GM12878 (cell line): ENCODE measurements at regions of chr10 and their contacts with region 1.

Region 1: DNA sequence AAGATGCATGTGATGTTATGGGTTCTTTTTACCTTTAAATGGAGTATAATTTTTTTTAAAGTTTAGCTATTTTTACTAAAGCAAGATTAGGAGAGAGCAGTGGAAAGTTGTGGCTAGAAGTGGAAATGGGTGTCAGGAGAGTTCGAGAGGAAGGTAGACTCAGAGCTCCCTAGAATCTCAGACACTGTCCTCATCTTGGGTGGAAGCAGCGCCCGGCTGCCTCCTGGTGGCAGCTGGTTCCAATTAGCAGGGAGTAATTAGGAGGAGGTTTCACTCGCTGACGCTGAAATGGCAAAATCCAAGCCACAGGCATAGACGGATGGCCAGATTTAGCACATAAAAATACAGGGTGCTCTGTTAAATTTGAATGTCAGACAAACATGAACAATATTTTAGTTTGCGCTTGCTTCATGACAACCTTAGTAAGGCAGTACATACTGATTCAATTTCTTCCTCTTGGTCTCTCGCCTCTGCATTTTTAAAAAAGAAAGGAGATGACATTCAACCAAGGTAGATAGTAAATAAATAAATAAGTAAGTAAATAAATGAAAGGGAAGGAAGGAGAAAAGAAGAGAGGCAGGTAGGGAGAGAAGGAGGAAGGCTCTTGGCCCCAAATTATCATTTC is 58.5 kb downstream of the LGI1 start:
- DNase-seq: no peak
- ATAC-seq: peak; percentile 83
- H3K4me3 ChIP-seq: no peak overlapping the region
- H3K27ac ChIP-seq: no peak overlapping the region
- H3K4me1 ChIP-seq: no peaks in the 10 kb centered on the region
- H3K27me3 ChIP-seq: peaks cover 0 to 14% of the 10 kb centered on the region in 2 experiments; a peak in 2 of 4 replicates
- CTCF ChIP-seq: peak; percentile 64 to 71 (median 64)
- EP300 ChIP-seq: no peak
- POLR2A ChIP-seq: no peak
- RAD21 ChIP-seq: peak; percentile 68

Region 2: DNA sequence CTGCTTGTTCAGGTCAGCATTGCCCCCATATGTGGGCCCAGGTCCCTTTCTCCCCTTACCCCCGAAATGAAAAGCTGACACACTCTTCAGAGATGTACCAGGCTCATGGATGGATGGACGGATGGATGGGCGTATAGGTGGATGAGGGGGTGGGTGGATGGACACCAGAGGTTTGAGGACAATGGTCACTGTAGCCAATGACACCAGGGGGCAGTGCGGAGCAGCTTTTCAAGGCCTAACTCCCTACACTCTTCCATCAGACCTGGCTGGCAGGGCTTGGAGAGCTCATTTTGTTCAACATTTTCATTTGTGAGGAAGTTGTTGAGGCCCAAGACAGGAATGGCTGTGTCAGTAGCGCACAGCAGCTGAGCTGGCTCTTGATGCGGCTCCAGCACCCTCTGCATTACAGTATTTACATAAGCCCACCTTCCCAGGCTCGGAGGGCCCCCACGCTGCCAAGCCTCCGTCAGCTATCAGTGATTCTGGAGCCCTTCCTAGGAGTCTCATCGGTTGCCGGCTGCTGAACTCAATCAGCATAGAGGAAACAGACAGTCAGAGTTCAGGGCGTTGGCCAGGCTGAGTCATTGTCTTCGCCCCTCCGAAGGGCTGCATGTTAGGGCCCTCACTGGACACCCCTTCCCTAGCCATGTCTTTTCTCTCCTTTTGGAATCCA is 261.3 kb before region 1 on chr10:
- CTCF ChIA-PET with region 1: interaction called, 19 read pairs
- POLR2A ChIA-PET with region 1: no interaction called
- RAD21 ChIA-PET with region 1: interaction called, 13 read pairs
- SMC1A ChIA-PET with region 1: interaction called, 12 read pairs
- in situ Hi-C with region 1: loop called (anchors 10 kb)
- intact Hi-C with region 1: loop called (anchors 2 kb)
- DNase-seq: no peak
- ATAC-seq: peak; percentile 99
- H3K4me3 ChIP-seq: no peak overlapping the region
- H3K27ac ChIP-seq: no peak overlapping the region
- H3K4me1 ChIP-seq: no peaks in the 10 kb centered on the region
- H3K27me3 ChIP-seq: no peaks in the 10 kb centered on the region
- CTCF ChIP-seq: peak; percentile 77 to 83 (median 82)
- EP300 ChIP-seq: no peak
- POLR2A ChIP-seq: no peak
- RAD21 ChIP-seq: peak; percentile 57

Region 3: DNA sequence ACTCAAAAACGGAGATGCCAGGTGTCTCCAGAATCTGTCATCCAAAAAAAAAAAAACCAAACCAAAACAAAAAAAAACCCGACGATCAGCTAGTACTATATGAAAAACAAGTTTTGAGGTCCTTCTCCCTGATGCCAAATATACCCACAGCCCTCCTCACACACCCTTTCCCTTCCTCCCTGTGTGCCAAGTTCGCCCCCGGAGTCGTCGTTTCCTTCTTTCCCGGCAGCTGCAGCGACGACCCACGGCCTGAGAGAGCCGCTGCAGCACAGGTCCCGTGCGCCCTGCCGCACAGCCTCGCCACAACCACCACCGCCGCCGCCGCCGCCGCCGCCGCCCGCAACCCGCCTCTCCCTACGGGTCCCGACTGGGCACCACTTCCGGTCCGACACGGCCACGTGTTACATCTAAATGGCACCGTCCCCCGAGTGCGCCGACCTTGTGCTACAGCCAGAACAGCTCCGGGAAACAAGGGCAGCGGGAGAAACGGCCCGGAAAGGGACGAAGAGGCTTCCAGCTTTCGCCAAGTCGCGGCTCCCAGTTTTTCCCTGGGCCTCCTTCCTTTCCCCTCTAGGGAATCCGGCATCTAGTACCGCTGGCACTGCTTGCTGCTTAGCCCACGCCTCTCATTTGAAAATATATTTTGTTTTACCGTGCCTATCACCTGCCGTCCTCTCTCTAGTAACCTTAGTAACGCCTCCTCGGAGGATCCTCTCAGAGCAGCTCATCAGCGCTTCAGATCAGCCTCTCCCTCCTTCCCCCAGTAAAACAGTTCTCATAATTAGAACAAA is 113.8 kb before region 1 on chr10 and contains the start of gene FRA10AC1:
- CTCF ChIA-PET with region 1: interaction called, 46 read pairs
- POLR2A ChIA-PET with region 1: no interaction called
- RAD21 ChIA-PET with region 1: interaction called, 16 read pairs
- SMC1A ChIA-PET with region 1: interaction called, 36 read pairs
- in situ Hi-C with region 1: loop called (anchors 5 kb)
- intact Hi-C with region 1: loop called (anchors 1 kb)
- DNase-seq: no peak
- ATAC-seq: peak; percentile 91
- H3K4me3 ChIP-seq: peak within 1 kb of the TSS; percentile 87
- H3K27ac ChIP-seq: peak within 1 kb of the TSS; percentile 76
- H3K4me1 ChIP-seq: no peaks in the 10 kb centered on the region
- H3K27me3 ChIP-seq: no peaks in the 10 kb centered on the region
- CTCF ChIP-seq: peak; percentile 50 to 55 (median 54); a peak in 5 of 6 replicates
- EP300 ChIP-seq: peak; percentile 39 to 71; a peak in 2 of 4 replicates
- POLR2A ChIP-seq: peak; percentile 86
- RAD21 ChIP-seq: peak; percentile 52
- polyA plus RNA-seq, gene FRA10AC1: 5.3 to 10.8 TPM

Region 4: GRCh38 chr10:93859049-93859655 is 42.9 kb after region 1 on chr10:
- CTCF ChIA-PET with region 1: interaction called, 16 read pairs
- POLR2A ChIA-PET with region 1: no interaction called
- RAD21 ChIA-PET with region 1: interaction called, 3 read pairs
- SMC1A ChIA-PET with region 1: interaction called, 8 read pairs
- in situ Hi-C with region 1: no loop called
- intact Hi-C with region 1: no loop called
- DNase-seq: no peak
- ATAC-seq: peak; percentile 46; the same call in 1 of the 3 replicates
- H3K4me3 ChIP-seq: no peak overlapping the region
- H3K27ac ChIP-seq: no peak overlapping the region
- H3K4me1 ChIP-seq: no peaks in the 10 kb centered on the region
- H3K27me3 ChIP-seq: no peaks in the 10 kb centered on the region
- CTCF ChIP-seq: peak; percentile 20 to 49 (median 36); a peak in 4 of 6 replicates
- EP300 ChIP-seq: no peak
- POLR2A ChIP-seq: no peak
- RAD21 ChIP-seq: peak; percentile 58

Region 5: DNA sequence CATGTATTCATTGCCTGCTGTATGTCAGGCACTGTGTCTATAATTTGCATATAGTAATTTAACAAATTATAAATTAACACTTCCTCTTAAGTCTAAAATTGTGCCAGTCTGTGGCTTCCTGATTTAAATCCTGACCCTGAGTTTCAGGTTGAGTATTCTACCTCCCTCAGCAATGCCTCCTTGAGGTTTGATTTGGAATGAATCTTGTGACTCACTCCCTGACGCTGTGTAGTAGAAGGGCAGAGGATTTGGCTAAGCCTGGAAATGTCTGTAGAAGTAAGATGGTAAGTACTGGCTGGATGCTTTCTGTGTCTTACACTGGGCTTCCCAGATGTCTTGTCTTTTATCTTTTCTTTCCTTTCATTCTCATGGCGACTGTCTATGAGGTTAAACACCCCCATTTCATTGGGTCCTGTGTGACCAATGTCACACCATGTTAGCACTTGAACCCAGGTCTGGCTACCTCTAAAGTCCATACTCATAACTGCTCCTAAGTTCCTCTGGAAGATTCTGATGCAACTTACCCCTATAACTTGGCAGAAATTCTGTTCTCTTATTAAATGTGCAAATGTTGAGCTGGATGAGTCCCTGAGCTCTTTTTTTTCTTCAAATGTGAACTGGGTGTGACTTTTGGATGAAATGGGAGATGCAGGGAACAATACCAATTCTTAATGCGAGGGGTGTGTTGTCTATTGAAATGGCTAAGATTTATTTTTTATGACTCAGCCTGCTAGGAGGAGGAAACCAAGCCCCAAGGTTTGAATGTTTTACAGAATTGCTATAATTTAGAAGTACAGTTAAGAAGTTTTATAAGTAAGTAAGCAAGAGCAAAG is 226.0 kb after region 1 on chr10:
- CTCF ChIA-PET with region 1: no interaction called
- POLR2A ChIA-PET with region 1: no interaction called
- RAD21 ChIA-PET with region 1: no interaction called
- SMC1A ChIA-PET with region 1: no interaction called
- in situ Hi-C with region 1: no loop called
- intact Hi-C with region 1: no loop called
- DNase-seq: peak; percentile 7
- ATAC-seq: peak; percentile 32; the same call in 2 of the 3 replicates
- H3K4me3 ChIP-seq: no peak overlapping the region
- H3K27ac ChIP-seq: no peak overlapping the region
- H3K4me1 ChIP-seq: no peaks in the 10 kb centered on the region
- H3K27me3 ChIP-seq: no peaks in the 10 kb centered on the region
- CTCF ChIP-seq: no peak
- EP300 ChIP-seq: no peak
- POLR2A ChIP-seq: no peak
- RAD21 ChIP-seq: no peak

Region 6: DNA sequence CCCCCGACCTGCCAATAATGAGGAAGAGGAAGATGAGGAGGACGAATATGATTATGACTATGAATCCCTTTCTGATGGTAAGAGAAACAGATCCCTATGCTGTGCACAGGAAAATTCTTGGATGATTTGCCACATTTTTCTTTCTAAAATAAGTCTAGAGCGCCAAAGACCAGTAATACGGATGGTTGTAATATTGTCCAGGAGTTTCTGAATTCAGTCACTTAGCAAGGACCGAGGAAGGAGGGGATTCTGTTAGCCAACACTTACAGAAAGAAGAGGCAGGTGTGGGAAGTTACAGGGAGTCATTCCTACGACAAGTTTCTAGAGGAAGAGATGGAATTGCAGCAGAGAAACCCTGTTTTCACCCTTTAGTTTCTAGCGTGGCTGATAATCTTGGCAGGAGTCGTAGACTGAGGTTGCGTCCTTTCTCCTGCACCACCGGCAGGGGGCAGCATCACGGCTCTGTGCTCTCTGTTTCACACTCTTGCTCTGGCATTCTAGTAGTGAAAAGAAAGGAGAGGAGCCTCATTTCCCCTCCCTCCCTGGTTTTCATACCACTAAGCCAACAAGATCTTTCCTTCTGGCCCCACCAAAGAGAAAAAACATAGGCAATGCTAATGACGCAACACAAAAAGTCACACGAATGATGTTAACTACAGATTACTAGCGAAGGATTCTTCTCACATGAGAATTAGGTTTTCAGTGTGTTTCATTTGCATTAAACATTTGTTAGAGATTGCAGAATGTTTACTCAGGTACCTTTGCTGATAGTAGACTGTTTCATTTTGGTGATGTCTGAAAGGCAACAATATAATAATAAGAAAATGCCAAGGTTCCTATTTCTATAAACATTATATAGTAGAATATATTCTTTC is 463.8 kb after region 1 on chr10:
- CTCF ChIA-PET with region 1: no interaction called
- POLR2A ChIA-PET with region 1: no interaction called
- RAD21 ChIA-PET with region 1: no interaction called
- SMC1A ChIA-PET with region 1: no interaction called
- in situ Hi-C with region 1: no loop called
- intact Hi-C with region 1: no loop called
- DNase-seq: peak; percentile 11
- ATAC-seq: peak; percentile 94
- H3K4me3 ChIP-seq: no peak overlapping the region
- H3K27ac ChIP-seq: no peak overlapping the region
- H3K4me1 ChIP-seq: no peaks in the 10 kb centered on the region
- H3K27me3 ChIP-seq: 0 out of 4 replicates have a peak, but pooled peaks cover 0 to 3% of the 10 kb centered on the region in 2 experiments
- CTCF ChIP-seq: peak; percentile 82 to 96 (median 88)
- EP300 ChIP-seq: no peak
- POLR2A ChIP-seq: no peak
- RAD21 ChIP-seq: peak; percentile 64

Region 7: DNA sequence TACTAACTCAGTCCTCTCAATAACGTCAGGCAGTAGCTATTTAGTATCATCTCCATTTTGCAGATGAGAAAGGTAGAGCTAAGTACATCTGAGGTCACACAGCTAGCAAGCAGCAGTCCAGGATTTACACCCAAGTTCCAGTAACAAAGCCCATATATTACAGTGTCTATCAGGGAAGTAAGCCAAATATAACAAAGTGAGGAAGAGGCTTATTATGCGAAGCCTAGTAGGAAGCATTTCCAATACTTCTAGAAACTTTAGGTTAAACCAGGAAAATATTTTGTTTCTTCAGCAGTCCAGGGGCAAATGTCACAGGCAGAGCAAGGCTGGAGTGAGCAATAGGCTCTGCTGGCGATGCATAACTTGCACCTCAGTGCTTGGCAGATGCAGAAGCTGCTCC is 492.6 kb after region 1 on chr10:
- CTCF ChIA-PET with region 1: no interaction called
- POLR2A ChIA-PET with region 1: no interaction called
- RAD21 ChIA-PET with region 1: no interaction called
- SMC1A ChIA-PET with region 1: no interaction called
- in situ Hi-C with region 1: no loop called
- intact Hi-C with region 1: loop called (anchors 5 kb)
- DNase-seq: no peak
- ATAC-seq: no peak
- H3K4me3 ChIP-seq: no peak overlapping the region
- H3K27ac ChIP-seq: no peak overlapping the region
- H3K4me1 ChIP-seq: no peaks in the 10 kb centered on the region
- H3K27me3 ChIP-seq: no peaks in the 10 kb centered on the region; a peak in 1 of 4 replicates
- CTCF ChIP-seq: no peak
- EP300 ChIP-seq: no peak
- POLR2A ChIP-seq: no peak
- RAD21 ChIP-seq: no peak